ENCODE measurements at regions of chr12 and their contacts with region 1.

Region 1: DNA sequence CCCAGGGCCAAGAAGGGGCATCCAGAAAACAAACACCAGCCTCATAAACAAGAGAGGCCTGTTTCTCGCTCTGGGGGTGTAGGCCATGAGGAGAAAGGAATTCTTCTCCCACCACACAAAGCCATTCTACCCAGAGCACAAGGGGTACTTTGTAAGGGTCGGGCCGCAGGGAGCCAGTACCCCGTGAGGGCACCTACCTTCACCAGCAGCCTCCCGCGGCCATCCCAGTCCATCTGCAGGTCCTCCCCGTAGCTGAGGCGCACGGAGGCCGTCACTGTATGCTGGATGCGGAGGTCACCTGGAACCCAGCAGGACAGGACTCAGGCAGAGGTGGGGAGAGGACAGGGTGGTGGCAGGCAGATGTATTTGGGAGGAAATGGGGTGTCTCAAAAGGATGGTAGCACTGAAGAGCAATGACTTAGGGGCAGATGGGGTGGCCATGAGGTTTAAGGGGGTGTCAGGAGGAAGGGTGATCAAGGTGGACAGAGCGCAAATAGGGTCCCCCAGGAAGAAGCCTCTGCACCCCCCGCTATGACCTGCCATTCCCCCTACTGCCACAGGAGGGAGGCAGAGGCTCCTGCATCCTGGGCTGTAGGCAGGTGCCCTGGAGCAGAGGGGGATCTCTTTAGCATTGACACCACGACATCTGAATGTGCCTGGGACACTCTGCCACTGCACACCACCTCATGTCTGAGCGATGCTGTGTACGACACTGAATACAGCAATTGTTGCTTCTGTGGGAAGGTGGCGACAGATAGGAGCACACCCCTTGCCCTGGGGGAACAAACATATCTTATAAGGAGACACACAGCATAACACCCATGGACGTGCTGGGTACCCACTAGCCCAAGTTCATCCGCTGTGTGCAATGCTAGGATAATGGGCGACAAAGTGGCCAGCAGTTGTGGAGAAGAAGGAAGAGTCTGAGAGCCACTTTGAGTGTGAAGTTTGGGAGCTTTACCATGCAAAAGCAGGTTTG is 61.4 kb downstream of the VWF start:
- DNase-seq: peak; percentile 88
- H3K4me3 Mint-ChIP-seq: no peak overlapping the region
- H3K27ac Mint-ChIP-seq: no peak overlapping the region
- H3K4me1 Mint-ChIP-seq: peaks cover 4% of the 10 kb centered on the region
- H3K27me3 Mint-ChIP-seq: peaks cover 8% of the 10 kb centered on the region

Region 2: DNA sequence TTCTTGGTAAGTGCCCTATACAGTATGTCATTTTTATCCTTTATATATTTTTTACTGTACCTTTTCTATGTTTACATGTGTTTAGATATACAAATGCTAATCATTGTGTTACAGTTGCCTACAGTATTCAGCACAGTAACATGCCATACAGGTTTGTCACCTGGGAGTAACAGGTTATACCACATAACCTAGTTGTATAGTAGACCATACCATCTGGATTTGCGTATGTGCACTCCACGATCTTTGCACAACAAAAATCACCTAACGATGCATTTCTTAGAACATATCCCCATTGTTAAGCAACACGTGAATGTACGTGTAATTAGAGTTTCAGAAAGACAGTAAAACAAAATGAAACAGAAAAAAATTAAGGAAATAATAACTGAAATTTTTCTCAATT is 106.1 kb before region 1 on chr12:
- intact Hi-C with region 1: no loop called
- DNase-seq: no peak
- H3K4me3 Mint-ChIP-seq: no peak overlapping the region
- H3K27ac Mint-ChIP-seq: no peak overlapping the region
- H3K4me1 Mint-ChIP-seq: no peaks in the 10 kb centered on the region
- H3K27me3 Mint-ChIP-seq: peaks cover 24% of the 10 kb centered on the region

Region 3: GRCh38 chr12:6278439-6279255 is 215.6 kb after region 1 on chr12:
- intact Hi-C with region 1: loop called (anchors 1 kb)
- DNase-seq: peak; percentile 97
- H3K4me3 Mint-ChIP-seq: peak overlapping the region; percentile 87
- H3K27ac Mint-ChIP-seq: peak overlapping the region; percentile 89
- H3K4me1 Mint-ChIP-seq: peaks cover 17% of the 10 kb centered on the region
- H3K27me3 Mint-ChIP-seq: peaks cover 41% of the 10 kb centered on the region

Region 4: GRCh38 chr12:6285063-6285477 is 222.0 kb after region 1 on chr12:
- intact Hi-C with region 1: loop called (anchors 1 kb)
- DNase-seq: peak; percentile 89
- H3K4me3 Mint-ChIP-seq: no peak overlapping the region
- H3K27ac Mint-ChIP-seq: peak overlapping the region; percentile 21
- H3K4me1 Mint-ChIP-seq: peaks cover under 1% of the 10 kb centered on the region
- H3K27me3 Mint-ChIP-seq: peaks cover 19% of the 10 kb centered on the region